Upper lobe of right lung (tissue), 1 donor: ENCODE measurements at regions of chr2 and their contacts with region 1.

Region 1: GRCh38 chr2:235106874-235107639 is 155.2 kb downstream of the SH3BP4 start:
- DNase-seq: no peak
- ATAC-seq: peak; percentile 73
- H3K4me3 ChIP-seq: no peak overlapping the region
- H3K27ac ChIP-seq: no peak overlapping the region
- H3K4me1 ChIP-seq: no peaks in the 10 kb centered on the region
- H3K27me3 ChIP-seq: no peaks in the 10 kb centered on the region
- CTCF ChIP-seq: peak; percentile 60

Region 2: DNA sequence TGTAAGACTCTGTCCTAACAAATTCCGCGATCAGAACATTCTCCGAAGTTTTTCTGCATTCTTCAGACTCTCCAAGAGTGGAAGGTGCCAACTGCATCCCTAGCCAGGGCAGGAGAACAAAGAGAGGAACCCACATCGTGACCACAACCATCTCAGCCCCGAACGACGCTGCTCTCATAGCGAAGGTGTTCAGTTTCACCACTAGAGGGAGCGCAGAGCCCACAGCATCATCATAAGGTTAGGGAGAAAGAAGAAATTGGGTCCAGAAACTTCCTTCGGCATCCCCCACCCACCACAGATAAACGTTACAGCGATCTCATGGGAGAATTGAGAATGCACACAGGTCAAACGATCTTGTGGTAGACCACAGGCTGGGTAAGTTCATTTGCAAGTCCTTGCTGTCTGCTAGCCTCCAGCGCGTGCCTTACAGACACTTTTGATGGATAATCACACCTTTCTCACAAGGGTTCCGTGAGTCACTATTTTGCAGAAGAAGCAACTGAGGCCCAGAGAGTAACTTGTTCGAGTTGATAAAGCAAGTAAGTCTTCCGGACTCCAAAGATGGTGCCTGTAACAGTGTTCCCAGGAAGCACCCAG is 556.4 kb before region 1 on chr2:
- intact Hi-C with region 1: loop called (anchors 5 kb)
- DNase-seq: peak; percentile 73
- ATAC-seq: peak; percentile 90
- H3K4me3 ChIP-seq: no peak overlapping the region
- H3K27ac ChIP-seq: no peak overlapping the region
- H3K4me1 ChIP-seq: no peaks in the 10 kb centered on the region
- H3K27me3 ChIP-seq: peaks cover 4% of the 10 kb centered on the region
- CTCF ChIP-seq: peak; percentile 97